ENCODE measurements at regions of chr3 and their contacts with region 1.

Region 1: DNA sequence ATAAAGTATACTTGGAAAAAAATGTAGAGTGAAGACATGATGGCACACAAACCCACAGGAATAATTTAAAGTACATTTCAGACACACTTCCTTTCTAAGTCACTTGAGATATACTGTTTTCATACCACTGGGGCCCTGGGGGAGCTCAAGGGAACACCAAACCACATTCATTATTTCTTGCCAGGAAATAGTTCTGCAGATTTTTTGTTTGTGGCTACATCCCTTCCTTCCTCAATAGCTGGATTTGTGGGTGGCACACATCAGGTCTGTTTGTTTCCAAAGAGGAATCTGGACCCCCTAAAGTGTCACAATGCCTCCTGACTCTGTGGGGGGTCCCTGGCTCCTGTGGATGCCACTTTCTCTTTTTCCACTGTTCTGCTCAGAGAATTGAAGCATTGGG is 153.5 kb upstream of the COL8A1 start:
- DNase-seq: peak; percentile 73
- H3K4me3 ChIP-seq: no peak overlapping the region
- CTCF ChIP-seq: no peak

Region 2: DNA sequence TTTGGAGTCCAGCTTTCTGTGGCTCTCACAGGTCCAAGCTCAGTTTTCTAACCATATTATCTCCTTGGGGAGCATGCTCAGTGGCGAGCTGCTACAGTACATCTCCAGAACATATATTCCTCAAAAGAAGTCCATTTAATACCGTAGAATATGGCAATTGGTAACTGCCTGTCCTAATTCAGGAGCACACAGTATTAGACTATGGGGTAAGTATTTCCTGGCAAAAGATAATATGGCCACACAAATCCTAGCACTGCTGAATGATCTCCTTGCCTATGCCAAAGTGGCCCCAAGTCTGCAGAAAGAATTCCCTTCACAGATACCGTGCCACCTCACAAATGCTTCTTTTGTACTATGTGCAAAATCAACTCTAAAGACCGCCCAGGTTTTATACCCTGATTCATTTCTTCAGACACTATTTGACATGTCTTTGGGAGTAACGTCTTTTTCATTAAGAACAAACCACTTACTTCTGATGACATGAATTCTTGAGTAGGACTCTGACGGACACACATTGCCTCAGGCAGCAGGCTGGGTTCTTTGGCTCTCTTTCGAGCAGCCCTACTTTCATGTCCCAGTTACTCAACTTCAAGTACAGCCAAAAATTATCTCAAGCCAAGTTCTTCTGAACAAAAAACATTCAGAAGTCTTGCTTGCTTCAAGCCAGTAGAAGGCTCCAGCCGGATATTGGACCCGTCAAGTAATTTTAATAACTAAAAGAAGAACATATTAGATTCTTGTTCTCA is 215.1 kb before region 1 on chr3:
- in situ Hi-C with region 1: no loop called
- DNase-seq: no peak
- H3K4me3 ChIP-seq: no peak overlapping the region
- CTCF ChIP-seq: no peak

Region 3: DNA sequence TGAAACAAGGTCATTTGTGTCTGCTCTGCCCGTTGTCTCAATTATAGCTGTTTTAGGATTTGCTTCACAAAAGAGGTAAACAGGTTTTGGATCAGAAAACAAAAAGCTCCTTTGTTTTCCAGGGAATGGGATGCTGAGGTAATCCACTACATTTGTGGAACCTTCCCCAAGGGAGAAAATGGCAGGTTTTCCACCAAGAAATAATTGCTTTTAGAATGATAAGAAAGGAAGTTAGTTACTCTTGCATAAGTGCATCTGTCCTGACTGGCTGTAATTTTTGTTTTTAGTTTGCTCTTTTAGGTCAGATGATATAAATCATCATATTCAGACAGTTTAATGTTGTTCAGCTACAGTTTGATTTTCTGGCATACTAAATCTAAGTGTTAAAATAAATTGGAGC is 45.0 kb before region 1 on chr3:
- in situ Hi-C with region 1: loop called (anchors 5 kb)
- DNase-seq: no peak
- H3K4me3 ChIP-seq: no peak overlapping the region
- CTCF ChIP-seq: no peak

Region 4: DNA sequence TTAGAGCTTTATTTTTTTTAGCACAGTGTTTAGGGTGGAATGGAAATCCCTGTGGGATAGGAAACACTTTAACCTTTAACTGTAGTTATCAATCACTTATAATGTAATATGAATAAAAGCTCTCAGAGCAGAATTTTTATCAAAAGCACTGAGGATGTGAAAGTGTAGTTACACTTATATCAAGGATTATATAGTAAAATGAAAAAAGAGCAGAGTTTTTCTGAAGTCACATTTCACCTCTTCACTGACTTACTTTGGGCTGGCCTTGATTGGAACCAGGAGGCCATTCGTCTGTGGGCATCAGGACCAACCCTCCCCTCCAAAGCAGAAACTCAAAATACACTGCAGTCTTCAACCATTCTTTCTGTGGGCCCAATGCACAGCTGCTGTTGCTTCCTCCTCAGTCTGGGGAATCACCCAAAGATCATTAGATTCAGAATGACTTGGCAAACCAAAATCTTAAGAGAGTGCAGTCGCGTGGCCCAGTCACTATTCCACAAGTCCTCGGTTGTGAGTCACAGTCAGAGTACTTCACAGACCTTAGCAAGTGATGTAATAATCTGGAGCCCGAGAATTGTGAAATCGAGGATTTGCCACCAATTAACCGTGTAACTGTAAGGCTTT is 20.9 kb after region 1 on chr3:
- in situ Hi-C with region 1: no loop called
- DNase-seq: no peak
- H3K4me3 ChIP-seq: no peak overlapping the region
- CTCF ChIP-seq: no peak

Region 5: DNA sequence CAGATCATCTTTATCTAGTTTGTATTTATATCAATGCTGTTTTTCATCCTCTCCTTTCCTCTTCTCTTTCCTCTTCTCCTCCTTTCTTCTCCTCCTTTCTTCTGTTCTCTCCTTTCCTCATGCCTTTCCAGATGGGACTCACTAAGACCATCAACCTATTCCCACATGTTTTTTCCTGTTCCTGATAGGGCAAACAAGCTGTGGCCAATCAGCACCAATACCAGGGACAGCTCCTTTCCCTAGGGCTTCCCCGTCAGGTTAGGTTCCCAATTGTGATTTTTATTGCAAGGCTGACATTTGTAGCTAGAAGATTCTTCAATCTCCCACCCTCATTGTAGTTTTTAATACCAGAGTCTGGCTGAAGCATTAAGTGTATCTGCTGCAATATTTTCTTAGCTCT is 77.3 kb after region 1 on chr3:
- in situ Hi-C with region 1: no loop called
- DNase-seq: peak; percentile 56
- H3K4me3 ChIP-seq: no peak overlapping the region
- CTCF ChIP-seq: no peak